Psoas muscle (tissue), 8 donors: ENCODE measurements at regions of chr13 and their contacts with region 1.

Region 1: DNA sequence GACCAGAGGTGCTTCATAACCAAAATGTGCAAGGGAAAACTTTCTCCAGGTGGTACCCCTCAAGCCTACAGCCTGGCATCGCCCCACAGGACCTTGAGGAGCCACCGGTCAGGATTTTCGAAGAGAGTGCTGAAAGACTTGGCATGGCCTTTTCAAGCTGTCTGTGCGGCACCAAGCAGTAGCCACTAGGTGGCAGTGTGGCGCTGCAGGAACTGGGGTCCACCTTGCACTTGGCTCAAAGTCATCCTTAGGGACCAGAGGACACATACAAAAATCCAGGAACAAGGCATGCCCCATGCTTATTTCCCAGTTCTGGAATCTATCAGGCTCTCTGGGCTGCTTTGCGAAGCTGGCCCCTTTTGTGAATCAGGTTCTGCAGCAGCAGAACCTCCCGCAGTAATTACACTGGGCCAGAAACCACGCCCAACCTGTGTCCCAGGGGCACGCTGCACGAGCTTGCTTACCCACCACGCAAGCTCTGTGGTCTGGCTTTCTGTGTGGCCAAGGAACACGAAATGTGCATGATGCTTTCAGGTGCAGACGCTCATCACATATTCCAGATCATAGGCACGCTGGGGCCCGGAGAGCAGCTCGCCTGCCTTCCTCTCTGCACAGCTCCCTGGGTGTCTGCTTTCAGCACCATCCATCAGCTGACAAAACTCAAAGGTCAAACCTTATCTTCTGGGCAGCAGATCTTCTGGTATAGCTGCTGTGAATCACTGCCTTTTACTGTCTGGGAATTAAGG is 87.2 kb downstream of the SLC7A1 start:
- DNase-seq: peak; percentile 83 to 91
- ATAC-seq: peak; percentile 82 to 96 (median 88)
- H3K4me3 ChIP-seq: no peak overlapping the region
- H3K27ac ChIP-seq: no peak overlapping the region
- H3K4me1 ChIP-seq: peaks cover 5% of the 10 kb centered on the region
- H3K27me3 ChIP-seq: peaks cover 0 to 38% (median 13%) of the 10 kb centered on the region in 3 donors
- CTCF ChIP-seq: peak; percentile 97

Region 2: GRCh38 chr13:29713839-29714238 is 205.5 kb after region 1 on chr13:
- intact Hi-C with region 1: loop called in 1 of 2 experiments (anchors 5 kb)
- DNase-seq: no peak
- ATAC-seq: no peak
- H3K4me3 ChIP-seq: no peak overlapping the region
- H3K27ac ChIP-seq: no peak overlapping the region
- H3K4me1 ChIP-seq: no peaks in the 10 kb centered on the region
- H3K27me3 ChIP-seq: no peaks in the 10 kb centered on the region
- CTCF ChIP-seq: peak; percentile 22

Region 3: GRCh38 chr13:29801737-29802305 is 293.5 kb after region 1 on chr13:
- intact Hi-C with region 1: no loop called
- DNase-seq: no peak
- ATAC-seq: peak in 3 of 4 donors; percentile 66 to 67 (median 67)
- H3K4me3 ChIP-seq: no peak overlapping the region
- H3K27ac ChIP-seq: no peak overlapping the region
- H3K4me1 ChIP-seq: peaks cover 44% of the 10 kb centered on the region
- H3K27me3 ChIP-seq: no peaks in the 10 kb centered on the region
- CTCF ChIP-seq: no peak